ENCODE measurements at regions of chr17 and their contacts with region 1.

Region 1: GRCh38 chr17:15999439-16000350 is at the starts of genes TTC19 and ZSWIM7:
- H3K4me3 ChIP-seq: peak within 1 kb of the TSS; percentile 89
- H3K27ac ChIP-seq: peak within 1 kb of the TSS; percentile 97
- H3K4me1 ChIP-seq: no peaks in the 10 kb centered on the region
- CTCF ChIP-seq: peak; percentile 85

Region 2: GRCh38 chr17:15944759-15945529 is 54.8 kb before region 1 on chr17 and contains the start of gene ADORA2B:
- CTCF ChIA-PET with region 1: interaction called, 36 read pairs
- POLR2A ChIA-PET with region 1: interaction called, 33 read pairs
- H3K4me3 ChIP-seq: peak within 1 kb of the TSS; percentile 62
- H3K27ac ChIP-seq: peak within 1 kb of the TSS; percentile 37; the same call in 1 of the 2 replicates
- H3K4me1 ChIP-seq: peaks cover 5% of the 10 kb centered on the region
- CTCF ChIP-seq: peak; percentile 77

Region 3: DNA sequence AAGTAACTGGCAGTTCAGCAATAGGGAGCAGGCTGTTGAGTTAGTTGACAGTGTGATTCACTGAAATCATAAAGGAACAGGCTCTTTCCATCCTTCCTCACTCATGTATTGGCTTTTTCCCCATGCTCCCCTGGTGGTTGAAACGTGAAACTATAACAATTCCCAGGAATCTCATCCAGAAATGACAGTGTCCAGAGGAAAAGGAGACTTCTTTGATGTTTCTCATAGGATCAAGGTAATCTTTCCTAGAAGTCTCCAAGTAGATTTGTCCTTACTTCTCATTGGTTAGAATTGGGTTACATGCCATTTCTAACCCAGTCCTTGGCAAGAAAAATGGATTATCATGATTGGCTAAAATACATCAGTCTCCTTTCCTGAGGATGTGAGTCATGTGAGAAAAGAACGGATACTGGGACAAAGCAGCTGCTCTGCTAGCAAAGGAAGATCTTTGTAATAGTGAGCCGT is 14.3 kb after region 1 on chr17:
- CTCF ChIA-PET with region 1: interaction called, 4 read pairs
- POLR2A ChIA-PET with region 1: interaction called, 14 read pairs
- H3K4me3 ChIP-seq: no peak overlapping the region
- H3K27ac ChIP-seq: no peak overlapping the region
- H3K4me1 ChIP-seq: peaks cover 2% of the 10 kb centered on the region; the same call in 1 of the 2 replicates
- CTCF ChIP-seq: no peak

Measured in HEK293 (cell line).